ENCODE measurements at regions of chr7 and their contacts with region 1.

Region 1: DNA sequence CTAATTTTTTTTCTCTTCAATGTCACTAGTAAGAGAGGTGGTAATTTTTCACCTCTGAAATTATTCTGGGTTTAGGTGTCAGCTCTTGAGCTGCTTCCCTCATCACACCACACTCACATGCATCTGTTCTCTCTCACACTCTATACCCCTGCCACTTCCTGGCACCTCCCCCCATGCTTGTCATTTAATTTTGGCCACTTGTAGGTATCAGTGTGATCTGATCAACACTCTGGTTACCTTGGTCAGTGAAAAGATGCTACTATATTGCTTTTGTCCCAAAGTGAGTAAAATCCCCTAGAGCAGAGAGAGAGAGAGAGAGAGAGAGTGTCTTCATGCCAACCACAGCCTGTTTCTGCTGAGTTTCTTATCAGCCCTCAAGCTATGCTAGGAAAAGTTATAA is 42.5 kb downstream of the STK17A start:
- DNase-seq: peak; percentile 84
- ATAC-seq: peak; percentile 75
- H3K4me3 Mint-ChIP-seq: peak overlapping the region; percentile 17
- H3K27ac Mint-ChIP-seq: peak overlapping the region; percentile 80
- H3K4me1 Mint-ChIP-seq: peaks cover 90% of the 10 kb centered on the region
- H3K27me3 Mint-ChIP-seq: no peaks in the 10 kb centered on the region
- CTCF ChIP-seq: no peak

Region 2: DNA sequence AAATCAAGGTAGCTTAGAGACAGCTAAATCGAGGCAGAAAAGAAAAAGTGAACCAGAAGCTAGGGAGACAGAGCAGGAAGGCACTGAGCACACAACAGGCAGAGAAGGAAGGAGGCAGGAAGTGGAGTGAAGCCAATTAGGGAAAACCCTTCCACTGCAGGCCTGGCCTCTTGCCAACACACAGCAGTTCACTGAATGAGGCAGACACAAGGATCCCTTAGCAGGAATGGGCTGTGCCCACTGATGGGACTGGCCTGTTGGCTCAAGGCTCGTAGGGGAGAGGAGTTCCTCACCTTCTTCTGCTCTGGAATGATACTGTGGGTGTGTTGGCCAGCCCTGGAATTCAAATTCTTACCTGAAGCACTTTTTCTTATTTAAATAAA is 262.8 kb before region 1 on chr7:
- CTCF ChIA-PET with region 1: no interaction called
- POLR2A ChIA-PET with region 1: no interaction called
- intact Hi-C with region 1: no loop called
- DNase-seq: no peak
- ATAC-seq: no peak
- H3K4me3 Mint-ChIP-seq: no peak overlapping the region
- H3K27ac Mint-ChIP-seq: no peak overlapping the region
- H3K4me1 Mint-ChIP-seq: no peaks in the 10 kb centered on the region
- H3K27me3 Mint-ChIP-seq: peaks cover 5% of the 10 kb centered on the region
- CTCF ChIP-seq: no peak

Region 3: DNA sequence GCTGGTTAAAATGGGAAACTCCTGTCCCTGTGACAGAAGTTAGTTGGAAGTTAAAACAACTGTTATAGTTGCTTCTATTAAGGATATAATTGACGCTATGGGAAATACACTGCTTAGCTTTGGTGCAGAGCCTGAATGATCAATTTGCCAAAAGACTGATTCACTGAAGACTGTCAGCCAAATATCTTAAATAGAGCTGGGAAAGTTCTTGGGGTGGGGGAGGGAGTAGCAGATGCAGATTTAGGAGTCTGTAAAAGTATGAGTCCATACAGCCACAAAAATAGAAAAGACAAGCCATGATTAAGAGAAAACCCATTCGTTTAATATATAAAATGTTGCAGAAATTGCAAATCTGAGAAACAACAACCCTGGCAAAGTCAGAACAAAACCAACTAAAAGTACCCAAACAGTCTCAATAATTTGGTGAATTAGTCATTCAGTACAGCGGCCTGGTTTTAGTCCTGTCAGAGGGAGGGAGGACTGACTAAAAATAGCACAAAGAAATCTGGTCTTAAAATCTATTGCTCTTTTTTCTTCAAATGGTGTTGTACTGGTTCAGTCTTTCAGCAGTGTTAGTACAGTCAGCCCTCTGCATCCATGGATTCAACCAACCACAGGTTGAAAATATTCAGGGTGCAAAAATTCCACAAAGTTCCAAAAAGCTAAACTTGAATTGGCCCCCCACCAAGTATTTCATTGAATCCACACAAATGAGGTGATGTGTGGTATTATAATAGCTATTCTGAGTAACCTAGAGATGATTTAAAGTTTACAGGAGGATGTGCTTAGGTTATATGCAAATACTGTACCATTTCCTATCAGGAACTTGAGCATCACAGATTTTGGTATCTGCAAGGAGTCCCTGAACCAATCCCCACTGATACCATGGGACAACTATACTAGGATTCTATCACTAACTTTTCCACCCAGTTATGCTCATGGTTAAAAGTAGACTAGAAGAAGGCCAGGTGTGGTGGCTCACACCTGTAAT is 12.6 kb before region 1 on chr7:
- CTCF ChIA-PET with region 1: interaction called, 4 read pairs
- POLR2A ChIA-PET with region 1: interaction called, 13 read pairs
- intact Hi-C with region 1: no loop called
- DNase-seq: peak; percentile 52
- ATAC-seq: peak; percentile 79
- H3K4me3 Mint-ChIP-seq: peak overlapping the region; percentile 22
- H3K27ac Mint-ChIP-seq: peak overlapping the region; percentile 96
- H3K4me1 Mint-ChIP-seq: peaks cover 67% of the 10 kb centered on the region
- H3K27me3 Mint-ChIP-seq: no peaks in the 10 kb centered on the region
- CTCF ChIP-seq: no peak

Region 4: DNA sequence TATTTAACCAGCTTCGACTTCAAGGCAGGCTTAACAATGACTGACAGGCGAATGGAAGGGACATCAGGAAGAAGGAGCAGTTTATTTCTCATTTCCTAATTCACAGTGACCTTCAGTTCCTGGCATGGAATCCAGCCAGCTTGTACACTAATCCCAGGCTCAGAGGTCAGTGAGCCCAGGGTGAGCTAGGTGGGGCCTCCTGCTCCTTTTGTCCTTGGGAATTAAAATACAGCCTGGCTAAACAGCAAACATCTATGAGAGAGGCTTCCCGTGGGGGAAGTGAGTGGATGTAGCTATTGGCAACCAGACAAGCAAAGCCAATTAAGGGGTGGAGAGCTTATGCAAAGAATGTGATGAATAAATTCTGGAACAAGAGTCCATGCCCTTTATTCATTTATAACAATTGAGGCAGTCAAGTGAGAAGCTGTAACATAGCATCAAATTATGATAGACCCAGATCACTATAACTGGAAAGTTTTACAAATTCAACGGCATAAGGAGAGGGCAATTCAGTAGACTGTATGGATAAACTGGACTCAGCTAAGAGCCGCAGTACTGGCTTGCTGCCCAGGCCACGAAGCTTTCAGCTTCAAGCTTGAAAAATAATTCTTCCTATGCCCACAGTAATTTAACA is 14.5 kb after region 1 on chr7:
- CTCF ChIA-PET with region 1: interaction called, 12 read pairs
- POLR2A ChIA-PET with region 1: interaction called, 30 read pairs
- intact Hi-C with region 1: no loop called
- DNase-seq: no peak
- ATAC-seq: no peak
- H3K4me3 Mint-ChIP-seq: peak overlapping the region; percentile 7
- H3K27ac Mint-ChIP-seq: peak overlapping the region; percentile 84
- H3K4me1 Mint-ChIP-seq: peaks cover 94% of the 10 kb centered on the region
- H3K27me3 Mint-ChIP-seq: no peaks in the 10 kb centered on the region
- CTCF ChIP-seq: no peak

Region 5: DNA sequence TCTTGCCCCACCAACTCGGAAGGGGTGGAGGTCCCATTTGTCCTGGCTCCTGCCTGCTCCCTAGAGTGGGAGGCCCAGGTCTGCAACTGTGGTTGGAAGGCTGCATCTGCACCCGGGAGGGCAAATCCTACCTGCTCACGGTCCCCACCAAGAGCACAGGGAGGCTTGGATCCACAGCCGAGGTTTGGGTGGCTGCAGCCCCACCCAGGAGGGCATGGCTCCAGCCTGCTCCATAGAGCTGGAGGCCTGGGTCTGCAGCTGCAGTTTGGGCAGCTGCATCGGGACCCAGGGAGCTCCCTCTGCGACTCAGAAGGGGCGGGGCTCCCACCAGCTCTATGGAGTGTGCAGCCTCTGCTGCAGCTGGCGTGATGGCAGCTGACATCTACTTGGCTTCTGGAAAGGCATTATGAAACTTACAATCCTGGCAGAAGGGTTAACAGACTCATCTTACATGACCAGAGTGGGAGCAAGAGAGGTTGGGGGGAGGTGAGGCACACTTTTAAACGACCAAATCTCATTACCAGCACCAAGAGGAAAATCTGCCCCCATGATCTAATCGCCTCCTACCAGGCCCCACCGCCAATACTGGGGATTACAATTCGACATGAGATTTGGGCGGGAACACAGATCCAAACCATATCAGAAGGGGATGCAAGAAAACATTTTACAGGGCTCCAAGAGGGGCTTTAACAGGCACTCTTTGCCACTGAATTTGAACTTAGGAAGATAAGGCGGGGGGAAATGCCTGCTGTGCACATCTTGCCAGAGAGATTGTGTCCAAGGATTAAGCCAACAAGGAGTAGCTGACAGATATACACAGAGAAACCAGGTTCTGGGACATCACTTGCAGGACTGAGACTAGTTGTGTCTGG is 124.8 kb after region 1 on chr7:
- CTCF ChIA-PET with region 1: no interaction called
- POLR2A ChIA-PET with region 1: no interaction called
- intact Hi-C with region 1: no loop called
- DNase-seq: no peak
- ATAC-seq: no peak
- H3K4me3 Mint-ChIP-seq: no peak overlapping the region
- H3K27ac Mint-ChIP-seq: no peak overlapping the region
- H3K4me1 Mint-ChIP-seq: peaks cover 15% of the 10 kb centered on the region
- H3K27me3 Mint-ChIP-seq: peaks cover 6% of the 10 kb centered on the region
- CTCF ChIP-seq: no peak